ENCODE measurements at regions of chr12 and their contacts with region 1.

Region 1: GRCh38 chr12:71746983-71747611 is 7.6 kb upstream of the RAB21 start:
- DNase-seq: peak; percentile 51

Region 2: DNA sequence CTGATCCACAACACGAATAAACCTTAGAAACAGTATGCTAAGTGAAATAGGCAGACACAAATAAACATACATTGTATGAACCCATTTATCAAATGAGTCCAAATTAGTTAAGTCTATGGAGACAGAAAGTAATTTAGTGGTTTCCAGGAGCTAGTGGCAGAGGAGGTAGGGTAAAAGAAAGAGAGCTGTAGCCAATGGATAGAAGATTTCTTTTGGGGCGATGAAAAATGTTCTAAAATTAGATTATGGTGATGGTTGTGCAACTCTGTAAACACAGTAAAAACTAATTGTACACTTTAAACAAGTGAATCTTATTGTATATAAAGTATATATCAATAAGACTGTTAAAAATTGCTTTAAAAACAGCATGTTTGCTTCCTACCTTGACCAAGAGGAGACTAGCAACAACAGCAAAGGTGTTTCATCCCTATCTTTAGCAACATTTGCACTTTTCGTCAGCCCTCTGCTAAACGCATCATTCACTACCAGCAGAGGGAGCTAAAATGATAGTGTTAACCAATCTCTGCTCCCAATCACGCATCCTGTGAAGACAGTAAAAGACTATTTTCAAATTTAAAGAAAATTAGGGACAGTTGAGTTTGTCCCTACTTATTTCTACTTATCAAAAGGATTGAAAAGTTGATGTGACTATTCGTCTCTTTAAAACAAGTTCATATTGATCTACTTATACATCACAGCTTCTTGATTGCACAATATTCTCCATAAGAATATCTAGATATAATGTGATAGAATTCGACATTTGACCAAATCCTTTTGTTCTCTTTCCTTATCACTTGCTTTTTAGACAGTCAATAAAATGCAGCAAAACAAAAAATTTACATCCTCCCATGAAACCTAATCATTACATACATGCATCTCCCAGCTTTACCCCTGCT is 331.5 kb before region 1 on chr12:
- CTCF ChIA-PET with region 1: interaction called, 13 read pairs
- POLR2A ChIA-PET with region 1: no interaction called
- DNase-seq: peak; percentile 58

Region 3: GRCh38 chr12:71533703-71534102 is 213.4 kb before region 1 on chr12:
- CTCF ChIA-PET with region 1: no interaction called
- POLR2A ChIA-PET with region 1: no interaction called
- DNase-seq: no peak

Region 4: GRCh38 chr12:71636704-71637115 is 110.4 kb before region 1 on chr12:
- CTCF ChIA-PET with region 1: interaction called, 13 read pairs
- POLR2A ChIA-PET with region 1: no interaction called
- DNase-seq: peak; percentile 60